ENCODE measurements at regions of chr10 and their contacts with region 1.

Region 1: GRCh38 chr10:112949875-112950507 is at the start of gene TCF7L2:
- DNase-seq: peak; percentile 89
- ATAC-seq: peak; percentile 82
- H3K4me3 ChIP-seq: peak within 1 kb of the TSS; percentile 85 to 90
- H3K27ac ChIP-seq: peak within 1 kb of the TSS; percentile 97
- H3K4me1 ChIP-seq: peaks cover 17% of the 10 kb centered on the region
- H3K27me3 ChIP-seq: no peaks in the 10 kb centered on the region
- CTCF ChIP-seq: no peak
- total RNA-seq, gene TCF7L2: 45.2 TPM

Region 2: DNA sequence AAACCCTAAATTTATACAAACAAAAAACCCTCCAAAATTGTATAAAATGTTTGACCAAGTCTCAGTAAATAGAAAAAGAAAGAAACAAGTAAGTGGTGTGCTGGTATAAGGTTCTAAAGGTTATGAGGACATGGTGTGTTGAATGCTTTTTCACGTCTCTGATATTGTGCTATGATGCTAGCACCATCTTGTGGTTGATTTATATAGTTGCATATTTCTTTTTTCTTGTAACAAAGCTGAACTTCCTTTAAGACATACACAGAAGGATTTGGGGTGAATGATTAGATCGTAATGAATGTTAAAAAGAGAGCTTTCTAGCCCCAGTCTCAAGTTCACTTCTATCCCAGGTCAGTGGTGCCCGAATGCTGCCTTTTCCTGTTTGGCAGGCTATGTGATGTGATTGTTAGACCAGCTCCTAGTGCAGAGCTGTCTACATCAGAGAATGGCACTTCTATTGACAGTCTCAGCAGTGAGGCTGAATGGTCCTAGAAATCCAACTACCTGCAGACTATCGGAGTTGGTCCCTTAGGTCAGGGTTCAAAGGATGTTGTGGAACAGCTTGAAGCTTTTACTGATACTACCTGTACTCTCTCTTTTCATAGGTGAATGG is 478.0 kb before region 1 on chr10:
- CTCF ChIA-PET with region 1: no interaction called
- POLR2A ChIA-PET with region 1: no interaction called
- in situ Hi-C with region 1: no loop called
- intact Hi-C with region 1: loop called (anchors 10 kb)
- DNase-seq: peak; percentile 50
- ATAC-seq: peak; percentile 87
- H3K4me3 ChIP-seq: no peak overlapping the region
- H3K27ac ChIP-seq: no peak overlapping the region
- H3K4me1 ChIP-seq: 0 out of 2 replicates have a peak, but pooled peaks cover 5% of the 10 kb centered on the region
- H3K27me3 ChIP-seq: no peaks in the 10 kb centered on the region
- CTCF ChIP-seq: peak; percentile 85

Region 3: DNA sequence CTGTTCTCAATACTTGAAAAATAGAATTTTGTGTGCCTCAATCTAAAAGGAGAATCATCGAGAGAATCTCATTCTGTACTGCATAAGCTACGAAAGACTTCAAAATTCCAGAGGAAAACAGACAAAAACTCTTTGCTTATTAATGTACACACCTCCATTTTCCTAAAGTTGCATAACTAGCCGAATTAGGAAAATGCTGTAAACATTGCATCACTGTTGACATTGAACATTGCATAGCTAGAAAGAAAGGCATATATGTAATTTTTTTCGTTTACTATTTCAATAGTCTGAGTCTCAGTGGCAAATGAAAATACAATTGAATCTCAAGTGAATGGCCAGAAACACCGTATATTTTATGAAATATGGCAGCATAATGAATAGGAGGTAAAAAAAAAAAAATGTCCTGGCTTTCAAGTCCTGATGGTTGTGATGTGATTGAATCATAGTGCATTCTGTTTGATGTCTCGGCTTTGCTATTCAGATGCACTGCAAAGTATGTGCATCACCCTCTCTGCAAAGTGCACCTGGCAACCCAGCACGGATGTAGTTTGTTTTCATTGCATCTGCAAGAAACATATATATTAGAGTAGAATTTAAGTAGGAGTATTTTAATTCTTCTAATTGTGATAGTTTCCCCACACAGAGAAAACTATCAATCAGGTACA is 306.3 kb before region 1 on chr10:
- CTCF ChIA-PET with region 1: no interaction called
- POLR2A ChIA-PET with region 1: interaction called, 12 read pairs
- in situ Hi-C with region 1: no loop called
- intact Hi-C with region 1: no loop called
- DNase-seq: no peak
- ATAC-seq: no peak
- H3K4me3 ChIP-seq: no peak overlapping the region
- H3K27ac ChIP-seq: no peak overlapping the region
- H3K4me1 ChIP-seq: no peaks in the 10 kb centered on the region
- H3K27me3 ChIP-seq: no peaks in the 10 kb centered on the region
- CTCF ChIP-seq: no peak

Region 4: DNA sequence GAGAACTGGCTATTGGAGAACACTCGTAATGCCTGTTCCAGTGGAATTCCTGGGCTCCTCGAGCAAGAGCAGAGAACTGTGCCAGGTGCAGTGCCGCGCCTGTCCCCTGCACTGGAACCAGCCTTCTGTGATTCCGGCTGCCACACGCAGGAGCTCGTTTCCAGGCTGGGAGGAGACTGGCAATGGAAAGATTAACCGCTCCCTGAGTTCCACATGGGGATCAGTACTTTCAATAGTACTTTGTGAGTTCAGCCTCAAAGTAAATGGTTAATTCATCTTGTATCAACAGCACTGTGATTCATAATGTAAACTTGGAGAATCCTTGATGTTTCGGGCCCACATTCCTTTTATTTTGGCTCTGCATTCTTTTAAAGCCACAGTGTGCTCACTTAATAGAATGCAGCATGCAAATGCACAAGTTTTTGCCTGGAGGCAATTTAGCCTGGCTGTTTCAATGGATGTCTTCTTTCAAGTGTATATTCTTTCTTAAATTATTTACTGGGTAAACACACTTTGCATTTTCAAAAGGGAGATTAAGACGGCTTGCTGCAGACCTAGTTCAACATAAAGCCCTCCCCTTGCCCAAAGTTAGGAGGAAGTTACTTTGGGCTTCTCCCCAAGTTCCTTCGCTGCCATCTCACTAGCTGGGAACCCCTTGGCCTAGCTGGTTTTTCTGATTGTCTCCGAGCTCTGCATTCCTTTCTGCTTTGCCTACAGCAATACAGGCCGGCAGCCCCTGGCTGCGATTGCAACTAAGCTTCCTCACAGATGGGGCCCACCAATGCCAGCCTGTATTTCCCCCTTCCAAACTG is 138.0 kb before region 1 on chr10:
- CTCF ChIA-PET with region 1: no interaction called
- POLR2A ChIA-PET with region 1: interaction called, 10 read pairs
- in situ Hi-C with region 1: no loop called
- intact Hi-C with region 1: no loop called
- DNase-seq: peak; percentile 62
- ATAC-seq: peak; percentile 91
- H3K4me3 ChIP-seq: peak overlapping the region in 1 of 2 experiments; percentile 8; a peak in 2 of 4 replicates
- H3K27ac ChIP-seq: peak overlapping the region; percentile 71
- H3K4me1 ChIP-seq: peaks cover 23% of the 10 kb centered on the region
- H3K27me3 ChIP-seq: no peaks in the 10 kb centered on the region
- CTCF ChIP-seq: no peak

Region 5: GRCh38 chr10:112963835-112964234 is 13.8 kb after region 1 on chr10:
- CTCF ChIA-PET with region 1: no interaction called
- POLR2A ChIA-PET with region 1: no interaction called
- in situ Hi-C with region 1: no loop called
- intact Hi-C with region 1: no loop called
- DNase-seq: no peak
- ATAC-seq: peak; percentile 50
- H3K4me3 ChIP-seq: no peak overlapping the region
- H3K27ac ChIP-seq: peak overlapping the region; percentile 94
- H3K4me1 ChIP-seq: peaks cover 81% of the 10 kb centered on the region
- H3K27me3 ChIP-seq: no peaks in the 10 kb centered on the region
- CTCF ChIP-seq: no peak

Region 6: DNA sequence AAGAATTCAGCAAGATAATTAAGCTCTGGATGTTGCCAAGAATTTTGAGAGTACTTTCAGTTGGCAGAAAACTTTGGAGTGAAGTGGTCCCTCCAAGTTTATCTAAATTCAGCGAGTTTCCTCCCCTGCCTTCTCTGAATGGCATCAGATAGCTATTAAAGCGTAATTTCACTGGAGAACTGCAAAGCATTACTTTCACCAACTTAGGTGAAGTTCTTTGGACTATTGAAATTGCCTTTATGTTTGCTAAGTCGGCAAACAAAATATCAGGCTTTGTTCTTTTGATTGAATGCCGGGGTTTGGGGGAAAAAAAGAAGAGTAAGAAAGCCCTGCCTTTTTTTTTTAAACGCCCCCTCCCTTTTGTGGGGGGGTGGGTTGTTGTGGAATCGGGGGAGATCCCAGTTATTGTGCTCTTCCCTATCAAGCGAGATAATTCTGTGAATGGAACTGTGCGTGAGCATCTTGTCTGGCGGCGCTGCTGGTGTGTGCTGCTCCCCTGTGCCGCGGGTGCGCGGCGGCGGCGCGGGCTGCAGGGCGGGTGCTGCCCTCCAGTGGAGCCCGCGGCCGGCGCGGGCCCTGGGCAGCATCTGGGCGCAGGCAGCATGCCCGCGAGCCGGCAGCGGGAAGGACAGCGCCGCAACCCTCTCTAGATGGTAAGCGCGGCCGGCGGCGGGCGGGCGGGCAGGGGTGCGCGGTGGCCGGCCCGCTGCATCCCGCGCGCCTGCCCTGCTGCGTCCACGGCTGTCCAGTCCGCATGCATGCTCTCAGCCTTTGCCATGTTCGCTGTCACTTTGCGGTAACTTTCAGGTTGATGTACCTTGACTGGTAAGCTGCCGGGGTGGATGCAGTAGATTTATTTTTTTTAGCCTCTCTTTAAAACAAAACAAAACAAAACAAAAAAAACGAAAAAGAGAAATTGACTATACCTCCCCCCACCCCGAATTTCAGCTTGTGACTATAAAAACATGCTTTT is 176.5 kb after region 1 on chr10:
- CTCF ChIA-PET with region 1: no interaction called
- POLR2A ChIA-PET with region 1: no interaction called
- in situ Hi-C with region 1: no loop called
- intact Hi-C with region 1: no loop called
- DNase-seq: peak; percentile 25
- ATAC-seq: peak; percentile 100
- H3K4me3 ChIP-seq: peak overlapping the region; percentile 23 to 51
- H3K27ac ChIP-seq: peak overlapping the region; percentile 83
- H3K4me1 ChIP-seq: peaks cover 48% of the 10 kb centered on the region
- H3K27me3 ChIP-seq: no peaks in the 10 kb centered on the region
- CTCF ChIP-seq: peak; percentile 99

Region 7: GRCh38 chr10:113175756-113176651 is 226.0 kb after region 1 on chr10:
- CTCF ChIA-PET with region 1: no interaction called
- POLR2A ChIA-PET with region 1: interaction called, 10 read pairs
- in situ Hi-C with region 1: no loop called
- intact Hi-C with region 1: no loop called
- DNase-seq: no peak
- ATAC-seq: no peak
- H3K4me3 ChIP-seq: no peak overlapping the region
- H3K27ac ChIP-seq: no peak overlapping the region
- H3K4me1 ChIP-seq: no peaks in the 10 kb centered on the region
- H3K27me3 ChIP-seq: no peaks in the 10 kb centered on the region
- CTCF ChIP-seq: no peak

Measured in Panc1 (cell line).